Prostate gland (tissue), 2 donors: ENCODE measurements at regions of chr20 and their contacts with region 1.

Region 1: GRCh38 chr20:58650776-58651558 is at the start of gene STX16:
- DNase-seq: peak; percentile 80
- H3K4me3 ChIP-seq: peak within 1 kb of the TSS; percentile 77 to 89
- H3K27ac ChIP-seq: peak within 1 kb of the TSS; percentile 92
- H3K4me1 ChIP-seq: peaks cover 16% of the 10 kb centered on the region
- H3K27me3 ChIP-seq: no peaks in the 10 kb centered on the region
- CTCF ChIP-seq: peak in 3 of 4 experiments; percentile 47 to 58 (median 58)
- POLR2A ChIP-seq: peak; percentile 68
- total RNA-seq, gene STX16: 34.3 to 115 TPM

Region 2: DNA sequence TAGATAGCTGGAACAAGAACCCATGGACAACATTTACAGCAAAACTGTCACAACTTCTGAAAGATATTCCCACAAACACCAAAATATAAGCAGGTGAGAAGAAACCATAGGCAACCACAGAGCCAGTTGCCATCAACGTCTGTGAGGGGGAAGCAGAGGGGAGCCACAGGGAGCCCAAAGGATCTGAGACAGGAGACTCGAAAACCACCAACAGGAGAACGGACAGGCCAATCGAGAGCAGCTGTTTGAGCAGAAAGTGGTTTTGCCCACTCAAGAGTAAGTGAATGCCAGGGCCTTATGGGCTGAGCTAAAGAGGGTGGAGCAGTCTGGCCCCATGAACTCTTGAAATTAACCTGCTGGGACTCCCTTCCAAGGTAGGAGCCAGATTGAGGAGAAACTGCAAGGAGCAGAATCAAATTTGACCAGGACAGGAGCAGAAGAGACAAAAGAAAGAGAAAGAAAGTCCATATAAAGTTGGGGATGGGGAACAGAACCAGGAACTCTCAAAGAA is 617.9 kb before region 1 on chr20:
- intact Hi-C with region 1: no loop called
- DNase-seq: no peak
- H3K4me3 ChIP-seq: no peak overlapping the region
- H3K27ac ChIP-seq: no peak overlapping the region
- H3K4me1 ChIP-seq: no peaks in the 10 kb centered on the region
- H3K27me3 ChIP-seq: no peaks in the 10 kb centered on the region
- CTCF ChIP-seq: no peak
- POLR2A ChIP-seq: no peak

Region 3: GRCh38 chr20:58481481-58482021 is 169.4 kb before region 1 on chr20:
- intact Hi-C with region 1: loop called (anchors 5 kb)
- DNase-seq: no peak
- H3K4me3 ChIP-seq: no peak overlapping the region
- H3K27ac ChIP-seq: no peak overlapping the region
- H3K4me1 ChIP-seq: peaks cover 3% of the 10 kb centered on the region
- H3K27me3 ChIP-seq: no peaks in the 10 kb centered on the region
- CTCF ChIP-seq: peak; percentile 25 to 55 (median 46)
- POLR2A ChIP-seq: no peak

Region 4: DNA sequence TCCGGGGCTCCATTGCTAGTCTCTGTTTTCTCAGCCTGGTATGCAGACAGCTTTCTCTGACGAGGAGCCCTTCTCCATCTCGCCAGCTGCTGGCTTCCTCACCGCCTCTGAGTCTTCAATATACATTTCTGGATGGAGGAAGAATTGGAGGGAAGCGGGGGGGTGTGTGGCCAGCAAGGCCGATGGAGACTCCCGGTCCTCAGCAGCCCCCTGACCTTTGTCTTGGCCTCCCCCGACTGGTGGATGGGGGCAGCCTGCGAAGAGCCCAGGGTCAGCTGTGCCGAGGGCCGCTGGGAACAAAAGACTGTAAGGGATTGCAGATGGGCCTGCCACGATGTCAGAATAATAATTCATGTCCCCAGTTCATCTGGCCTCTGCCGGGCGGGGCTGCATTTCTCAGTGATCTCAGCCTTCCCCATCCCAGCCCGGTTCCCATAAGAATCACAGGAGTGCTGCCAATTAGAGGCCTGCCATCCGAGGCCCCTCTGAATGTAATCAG is 54.2 kb before region 1 on chr20:
- intact Hi-C with region 1: loop called (anchors 2 kb)
- DNase-seq: no peak
- H3K4me3 ChIP-seq: no peak overlapping the region
- H3K27ac ChIP-seq: no peak overlapping the region
- H3K4me1 ChIP-seq: no peaks in the 10 kb centered on the region
- H3K27me3 ChIP-seq: no peaks in the 10 kb centered on the region
- CTCF ChIP-seq: no peak
- POLR2A ChIP-seq: no peak

Region 5: DNA sequence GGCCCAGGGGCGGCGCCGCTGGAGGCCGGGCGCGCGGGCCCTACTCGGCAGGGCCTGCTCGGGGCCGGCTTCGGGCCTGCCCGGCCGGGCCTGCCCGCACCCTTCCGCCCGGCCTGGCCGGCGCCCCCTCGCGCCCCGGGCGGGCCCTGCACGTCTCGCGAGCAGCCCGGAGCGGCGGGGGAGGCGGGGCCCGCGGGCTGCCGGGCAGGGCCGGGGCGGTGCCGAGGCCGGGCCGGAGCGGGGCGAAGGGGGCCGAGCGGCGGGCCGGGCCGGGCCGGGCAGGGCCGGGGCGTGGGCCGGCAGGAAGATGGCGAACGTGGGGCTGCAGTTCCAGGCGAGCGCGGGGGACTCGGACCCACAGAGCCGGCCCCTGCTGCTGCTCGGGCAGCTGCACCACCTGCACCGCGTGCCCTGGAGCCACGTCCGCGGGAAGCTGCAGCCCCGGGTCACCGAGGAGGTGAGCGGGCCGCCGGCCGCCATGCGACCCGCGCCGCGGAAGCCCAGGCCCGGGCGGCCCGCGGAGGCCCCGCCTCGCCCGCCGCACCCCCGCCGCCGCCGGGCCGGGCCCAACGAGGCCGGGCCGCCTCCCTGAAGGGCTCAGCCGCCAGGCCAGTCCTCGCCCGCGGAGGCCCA is 41.7 kb after region 1 on chr20 and contains the start of gene NPEPL1:
- intact Hi-C with region 1: loop called (anchors 2 kb)
- DNase-seq: peak; percentile 44
- H3K4me3 ChIP-seq: peak within 1 kb of the TSS; percentile 39 to 41
- H3K27ac ChIP-seq: peak within 1 kb of the TSS; percentile 68 to 74
- H3K4me1 ChIP-seq: peaks cover 8% of the 10 kb centered on the region
- H3K27me3 ChIP-seq: no peaks in the 10 kb centered on the region
- CTCF ChIP-seq: peak in 1 of 4 experiments; percentile 30
- POLR2A ChIP-seq: no peak
- total RNA-seq, gene NPEPL1: 25.7 to 63.1 TPM